CD8-positive, alpha-beta memory T cell (primary cell): ENCODE measurements at regions of chr1 and their contacts with region 1.

Region 1: GRCh38 chr1:51897699-51898031 is 19.1 kb upstream of the NRDC start:
- DNase-seq: no peak
- H3K4me3 ChIP-seq: no peak overlapping the region
- H3K4me3 Mint-ChIP-seq: no peak overlapping the region
- H3K27ac ChIP-seq: no peak overlapping the region
- H3K27ac Mint-ChIP-seq: no peak overlapping the region
- H3K4me1 ChIP-seq: no peaks in the 10 kb centered on the region
- H3K4me1 Mint-ChIP-seq: no peaks in the 10 kb centered on the region
- H3K27me3 ChIP-seq: peaks cover 6% of the 10 kb centered on the region
- H3K27me3 Mint-ChIP-seq: peaks cover 29 to 67% of the 10 kb centered on the region in 2 donors

Region 2: GRCh38 chr1:51708911-51709760 is 188.5 kb before region 1 on chr1:
- CTCF ChIA-PET with region 1: no interaction called
- POLR2A ChIA-PET with region 1: no interaction called
- DNase-seq: no peak
- H3K4me3 ChIP-seq: no peak overlapping the region
- H3K4me3 Mint-ChIP-seq: no peak overlapping the region
- H3K27ac ChIP-seq: no peak overlapping the region
- H3K27ac Mint-ChIP-seq: peak overlapping the region in 1 of 8 donors; percentile 30
- H3K4me1 ChIP-seq: no peaks in the 10 kb centered on the region
- H3K4me1 Mint-ChIP-seq: peaks cover 3 to 7% (median 6%) of the 10 kb centered on the region in 3 donors
- H3K27me3 ChIP-seq: no peaks in the 10 kb centered on the region
- H3K27me3 Mint-ChIP-seq: no peaks in the 10 kb centered on the region

Region 3: DNA sequence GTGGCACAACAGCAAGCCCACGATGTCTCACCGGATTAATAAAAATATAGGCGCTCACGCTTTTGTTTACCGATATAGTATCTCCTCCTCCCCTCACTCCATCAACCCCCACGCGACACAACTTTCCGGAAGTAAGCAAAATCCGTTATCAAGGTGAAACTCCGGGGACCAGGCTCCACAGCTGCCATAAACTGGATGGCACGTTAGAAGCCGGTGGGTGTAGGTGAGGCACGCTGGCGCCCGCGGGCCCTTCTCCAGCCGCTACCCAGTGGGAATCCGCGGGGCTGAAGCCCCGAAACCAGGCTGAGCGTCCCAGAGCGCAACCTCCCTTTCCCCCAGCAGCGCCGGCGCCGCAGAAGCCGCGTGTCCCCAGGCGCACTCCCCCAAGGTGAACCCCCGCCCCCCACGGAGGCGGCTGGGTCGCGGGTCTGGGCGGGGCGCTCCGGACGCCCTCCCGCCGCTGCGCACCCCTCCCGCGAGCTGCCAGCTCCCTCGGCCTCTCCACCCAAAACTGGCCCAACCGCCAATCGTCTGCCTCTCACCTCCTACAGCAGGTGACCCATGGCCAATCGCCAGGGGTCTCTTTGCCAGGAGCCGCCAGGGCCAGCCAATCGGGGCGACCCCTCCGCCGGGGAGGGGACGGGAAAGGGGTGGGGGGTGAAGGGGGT is 168.4 kb before region 1 on chr1:
- CTCF ChIA-PET with region 1: no interaction called
- POLR2A ChIA-PET with region 1: no interaction called
- DNase-seq: peak; percentile 88 to 95 (median 94)
- H3K4me3 ChIP-seq: peak overlapping the region; percentile 97
- H3K4me3 Mint-ChIP-seq: peak overlapping the region; percentile 89 to 96 (median 94)
- H3K27ac ChIP-seq: peak overlapping the region; percentile 84
- H3K27ac Mint-ChIP-seq: peak overlapping the region; percentile 81 to 95 (median 92)
- H3K4me1 ChIP-seq: peaks cover 27% of the 10 kb centered on the region
- H3K4me1 Mint-ChIP-seq: peaks cover 34 to 57% (median 52%) of the 10 kb centered on the region in 3 donors
- H3K27me3 ChIP-seq: no peaks in the 10 kb centered on the region
- H3K27me3 Mint-ChIP-seq: no peaks in the 10 kb centered on the region

Region 4: DNA sequence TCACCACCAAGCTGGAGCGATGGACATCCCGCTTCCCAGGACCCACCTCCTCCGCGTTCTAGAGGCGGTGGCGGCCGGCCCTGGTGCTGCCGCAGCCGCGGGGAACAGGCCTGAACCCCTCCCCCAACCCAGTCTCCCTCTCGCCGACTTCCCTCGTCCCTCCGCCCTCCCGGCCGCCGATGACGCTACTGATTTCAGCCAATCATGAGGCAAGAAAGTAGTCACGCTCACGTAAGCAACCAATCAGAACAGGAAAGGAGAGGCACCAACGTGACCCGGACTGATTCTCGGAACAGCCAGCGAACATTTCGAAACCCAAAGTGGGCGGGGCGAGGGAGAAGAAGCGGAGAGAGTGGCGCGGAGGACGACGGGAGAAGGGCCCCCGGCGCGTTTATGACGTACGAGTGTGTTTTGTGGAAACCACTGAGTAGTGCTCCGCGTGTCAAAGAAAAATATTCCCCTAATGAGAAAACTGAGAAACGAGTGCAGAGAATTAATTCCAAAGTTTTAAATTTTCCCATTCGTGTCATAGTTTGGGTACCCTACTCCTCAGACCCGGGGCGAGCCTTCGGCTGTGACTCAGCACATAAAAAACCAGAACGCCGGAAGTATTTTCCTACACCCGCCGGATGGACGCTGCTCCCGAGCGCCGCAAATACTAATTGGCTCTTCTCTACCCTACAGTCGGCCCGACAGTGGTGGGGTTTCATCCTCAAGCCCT is 18.9 kb before region 1 on chr1 and contains the start of gene NRDC:
- CTCF ChIA-PET with region 1: interaction called, 14 read pairs
- POLR2A ChIA-PET with region 1: interaction called, 4 read pairs
- DNase-seq: peak; percentile 99 to 100 (median 99)
- H3K4me3 ChIP-seq: peak within 1 kb of the TSS; percentile 99
- H3K4me3 Mint-ChIP-seq: no peak within 1 kb of the TSS
- H3K27ac ChIP-seq: peak within 1 kb of the TSS; percentile 99
- H3K27ac Mint-ChIP-seq: peak within 1 kb of the TSS in 1 of 8 donors; percentile 56
- H3K4me1 ChIP-seq: peaks cover 44% of the 10 kb centered on the region
- H3K4me1 Mint-ChIP-seq: peaks cover 0 to 20% (median 0%) of the 10 kb centered on the region in 3 donors
- H3K27me3 ChIP-seq: peaks cover 6% of the 10 kb centered on the region
- H3K27me3 Mint-ChIP-seq: peaks cover 14 to 22% of the 10 kb centered on the region in 2 donors
- total RNA-seq, gene NRDC: 129 to 139 TPM

Region 5: GRCh38 chr1:52002038-52002917 is 104.6 kb after region 1 on chr1:
- CTCF ChIA-PET with region 1: interaction called, 15 read pairs
- POLR2A ChIA-PET with region 1: no interaction called
- DNase-seq: peak in 4 of 5 donors; percentile 22 to 64 (median 58)
- H3K4me3 ChIP-seq: no peak overlapping the region
- H3K4me3 Mint-ChIP-seq: no peak overlapping the region
- H3K27ac ChIP-seq: no peak overlapping the region
- H3K27ac Mint-ChIP-seq: no peak overlapping the region
- H3K4me1 ChIP-seq: no peaks in the 10 kb centered on the region
- H3K4me1 Mint-ChIP-seq: no peaks in the 10 kb centered on the region
- H3K27me3 ChIP-seq: peaks cover 3% of the 10 kb centered on the region
- H3K27me3 Mint-ChIP-seq: peaks cover 11 to 36% of the 10 kb centered on the region in 2 donors